ENCODE measurements at regions of chr2 and their contacts with region 1.

Region 1: GRCh38 chr2:233404222-233404621 is 49.9 kb downstream of the DGKD start:
- DNase-seq: peak; percentile 76
- H3K4me3 Mint-ChIP-seq: no peak overlapping the region
- H3K27ac Mint-ChIP-seq: peak overlapping the region; percentile 34
- H3K4me1 Mint-ChIP-seq: peaks cover 41% of the 10 kb centered on the region
- H3K27me3 Mint-ChIP-seq: no peaks in the 10 kb centered on the region

Region 2: GRCh38 chr2:233418761-233419625 is 14.8 kb after region 1 on chr2:
- CTCF ChIA-PET with region 1: interaction called, 34 read pairs
- POLR2A ChIA-PET with region 1: interaction called, 42 read pairs
- DNase-seq: peak; percentile 65
- H3K4me3 Mint-ChIP-seq: peak overlapping the region; percentile 76
- H3K27ac Mint-ChIP-seq: peak overlapping the region; percentile 99
- H3K4me1 Mint-ChIP-seq: peaks cover 97% of the 10 kb centered on the region
- H3K27me3 Mint-ChIP-seq: no peaks in the 10 kb centered on the region

Region 3: DNA sequence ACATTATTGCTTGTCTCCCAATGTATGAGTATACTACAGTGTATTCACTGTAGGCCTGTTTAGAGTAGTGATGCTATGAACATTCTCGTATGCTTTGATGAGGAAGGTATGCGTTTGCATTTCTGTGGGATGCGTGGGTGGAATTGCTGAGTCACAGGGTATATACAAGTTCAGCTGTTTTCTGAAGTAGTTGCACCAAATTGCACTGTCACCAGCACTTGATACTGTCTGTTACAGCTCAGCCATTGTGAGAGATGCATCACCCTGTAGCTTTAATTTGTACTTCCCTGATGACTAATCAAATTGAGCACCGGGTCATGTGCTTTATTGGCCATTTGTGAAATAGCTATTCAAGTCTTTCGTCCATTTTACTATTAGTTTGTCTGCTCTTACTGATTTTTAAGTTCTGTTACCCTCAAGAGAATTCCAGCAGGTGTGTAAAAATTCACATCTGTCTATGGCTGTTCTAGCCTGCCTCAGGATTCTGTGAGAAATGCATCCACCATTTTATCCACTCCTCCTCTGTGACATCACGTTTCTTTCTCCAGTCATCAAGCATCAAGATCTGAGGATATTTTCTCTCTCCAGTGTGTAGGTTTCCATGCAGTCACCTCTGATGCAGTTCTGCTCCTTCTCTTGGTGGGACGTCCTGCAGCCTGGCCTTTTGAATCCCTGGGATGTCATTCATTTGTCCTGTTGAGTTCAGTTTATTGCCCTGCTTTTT is 22.6 kb after region 1 on chr2:
- CTCF ChIA-PET with region 1: interaction called, 34 read pairs
- POLR2A ChIA-PET with region 1: interaction called, 42 read pairs
- DNase-seq: peak; percentile 42
- H3K4me3 Mint-ChIP-seq: no peak overlapping the region
- H3K27ac Mint-ChIP-seq: peak overlapping the region; percentile 9
- H3K4me1 Mint-ChIP-seq: peaks cover 84% of the 10 kb centered on the region
- H3K27me3 Mint-ChIP-seq: no peaks in the 10 kb centered on the region

Region 4: GRCh38 chr2:233513953-233514655 is 109.9 kb after region 1 on chr2:
- CTCF ChIA-PET with region 1: no interaction called
- POLR2A ChIA-PET with region 1: no interaction called
- DNase-seq: no peak
- H3K4me3 Mint-ChIP-seq: no peak overlapping the region
- H3K27ac Mint-ChIP-seq: no peak overlapping the region
- H3K4me1 Mint-ChIP-seq: no peaks in the 10 kb centered on the region
- H3K27me3 Mint-ChIP-seq: no peaks in the 10 kb centered on the region